PC-9 (cell line): ENCODE measurements at regions of chr11 and their contacts with region 1.

Region 1: DNA sequence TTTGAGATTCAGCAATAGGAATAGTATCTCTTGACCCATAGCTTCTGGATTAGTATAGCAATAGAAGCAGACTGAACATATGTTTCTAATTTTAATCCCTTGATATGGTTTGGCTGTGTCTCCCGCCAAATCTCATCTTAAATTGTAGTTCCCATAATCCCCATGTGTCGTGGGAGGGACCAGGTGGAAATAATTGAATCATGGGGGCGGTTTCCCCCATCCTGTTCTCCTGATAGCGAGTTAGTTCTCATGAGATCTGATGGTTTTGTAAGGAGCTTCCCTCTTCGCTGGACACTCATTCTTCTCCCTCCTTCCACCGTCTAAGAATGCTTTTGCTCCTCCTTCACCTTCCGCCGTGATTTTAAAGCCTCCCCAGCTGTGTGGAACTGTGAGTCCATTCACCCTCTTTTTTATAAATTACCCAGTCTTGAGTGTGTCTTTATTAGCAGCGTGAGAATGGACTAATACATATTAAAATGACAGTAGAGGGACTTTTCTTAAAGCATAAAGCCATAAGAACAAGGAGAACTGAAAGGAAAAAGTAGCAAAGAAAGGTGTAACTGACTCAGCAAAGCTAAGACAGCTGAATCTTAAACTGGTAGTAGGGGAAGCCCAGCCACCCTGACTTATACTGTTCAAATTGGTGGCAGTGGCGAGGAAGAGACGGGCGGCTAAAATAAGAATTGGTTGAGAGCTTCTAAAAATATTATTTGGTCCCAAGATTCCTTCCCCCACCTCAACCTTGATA is 20.3 kb upstream of the SLN start:
- DNase-seq: no peak
- H3K4me3 ChIP-seq: no peak overlapping the region
- H3K27ac ChIP-seq: no peak overlapping the region
- H3K4me1 ChIP-seq: no peaks in the 10 kb centered on the region
- H3K27me3 ChIP-seq: no peaks in the 10 kb centered on the region
- CTCF ChIP-seq: no peak

Region 2: DNA sequence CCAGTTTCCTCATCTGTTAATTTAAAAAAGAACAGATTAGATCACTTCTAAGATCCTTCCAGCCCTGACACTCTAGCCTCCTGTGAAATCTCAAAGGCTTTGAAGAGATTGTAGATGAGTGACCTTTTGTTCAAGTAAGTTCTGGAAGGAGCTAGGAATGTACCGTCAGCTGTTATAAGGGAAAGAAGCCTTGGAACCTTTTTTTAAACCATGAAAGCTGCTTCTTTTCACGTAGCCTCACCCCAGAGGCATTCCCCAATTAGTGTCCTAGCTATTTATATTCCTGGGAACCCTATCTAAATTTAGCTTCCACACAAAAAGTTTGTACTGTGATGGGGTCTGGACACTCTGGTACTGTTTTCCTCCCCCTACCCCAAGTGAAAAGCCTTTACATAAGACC is 15.5 kb after region 1 on chr11:
- CTCF ChIA-PET with region 1: no interaction called
- POLR2A ChIA-PET with region 1: no interaction called
- intact Hi-C with region 1: loop called (anchors 2 kb)
- DNase-seq: no peak
- H3K4me3 ChIP-seq: no peak overlapping the region
- H3K27ac ChIP-seq: no peak overlapping the region
- H3K4me1 ChIP-seq: no peaks in the 10 kb centered on the region
- H3K27me3 ChIP-seq: no peaks in the 10 kb centered on the region
- CTCF ChIP-seq: no peak

Region 3: GRCh38 chr11:107908306-107908705 is 176.2 kb after region 1 on chr11:
- CTCF ChIA-PET with region 1: interaction called, 10 read pairs
- POLR2A ChIA-PET with region 1: no interaction called
- intact Hi-C with region 1: no loop called
- DNase-seq: no peak
- H3K4me3 ChIP-seq: no peak overlapping the region
- H3K27ac ChIP-seq: no peak overlapping the region
- H3K4me1 ChIP-seq: no peaks in the 10 kb centered on the region
- H3K27me3 ChIP-seq: no peaks in the 10 kb centered on the region
- CTCF ChIP-seq: no peak